ENCODE measurements at regions of chr6 and their contacts with region 1.

Region 1: GRCh38 chr6:45310118-45310788 is 17.9 kb upstream of the RUNX2 start:
- DNase-seq: peak; percentile 2 to 80 (median 51)
- ATAC-seq: peak; percentile 87
- H3K4me3 ChIP-seq: peak overlapping the region; percentile 14 to 28
- H3K4me3 Mint-ChIP-seq: peak overlapping the region; percentile 64
- H3K27ac ChIP-seq: peak overlapping the region; percentile 29 to 45
- H3K27ac Mint-ChIP-seq: peak overlapping the region; percentile 95
- H3K4me1 ChIP-seq: peaks cover 35% of the 10 kb centered on the region
- H3K4me1 Mint-ChIP-seq: peaks cover 65% of the 10 kb centered on the region
- H3K27me3 ChIP-seq: no peaks in the 10 kb centered on the region
- H3K27me3 Mint-ChIP-seq: no peaks in the 10 kb centered on the region
- CTCF ChIP-seq: no peak

Region 2: DNA sequence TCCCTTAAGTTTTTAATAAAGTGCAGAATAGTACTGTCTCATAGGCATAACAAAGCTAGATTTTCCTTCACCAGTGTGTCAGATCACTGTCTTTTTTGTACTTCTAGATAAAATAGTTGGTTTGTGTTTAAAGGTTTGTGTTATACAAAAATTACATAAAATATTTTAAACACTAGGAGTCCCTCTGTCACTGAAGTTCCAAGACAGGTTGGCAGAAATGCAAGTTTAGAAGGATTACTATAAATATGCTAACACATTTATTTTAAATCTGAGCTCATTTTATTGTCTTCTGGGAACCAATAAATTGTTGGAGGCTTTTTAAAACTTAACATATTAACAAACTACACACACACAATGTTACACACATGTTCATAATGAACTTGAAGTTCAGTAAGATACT is 12.9 kb before region 1 on chr6:
- CTCF ChIA-PET with region 1: no interaction called
- POLR2A ChIA-PET with region 1: interaction called, 3 read pairs
- intact Hi-C with region 1: loop called in 1 of 2 experiments (anchors 2 kb)
- DNase-seq: no peak
- ATAC-seq: no peak
- H3K4me3 ChIP-seq: no peak overlapping the region
- H3K4me3 Mint-ChIP-seq: no peak overlapping the region
- H3K27ac ChIP-seq: no peak overlapping the region
- H3K27ac Mint-ChIP-seq: peak overlapping the region; percentile 37
- H3K4me1 ChIP-seq: peaks cover 24% of the 10 kb centered on the region
- H3K4me1 Mint-ChIP-seq: peaks cover 53% of the 10 kb centered on the region
- H3K27me3 ChIP-seq: no peaks in the 10 kb centered on the region
- H3K27me3 Mint-ChIP-seq: no peaks in the 10 kb centered on the region
- CTCF ChIP-seq: no peak

Region 3: DNA sequence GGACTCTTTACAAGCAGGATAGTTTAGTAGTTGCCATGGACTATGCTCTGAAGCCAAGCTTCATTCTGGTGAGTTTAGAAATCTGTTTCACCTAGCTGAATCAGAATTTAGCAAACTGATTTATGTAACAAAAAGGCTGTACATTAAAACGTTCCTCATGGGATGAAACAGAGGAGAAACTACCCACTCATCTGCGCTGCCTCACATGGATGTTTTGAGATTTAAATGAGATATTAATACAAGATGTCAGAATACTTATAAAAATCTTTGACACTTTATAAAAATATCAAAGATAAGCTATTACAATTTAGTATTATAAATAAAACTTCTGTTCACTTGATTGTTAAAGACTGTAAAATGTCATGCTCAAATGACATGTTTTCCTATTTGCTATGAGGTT is 34.6 kb after region 1 on chr6:
- CTCF ChIA-PET with region 1: no interaction called
- POLR2A ChIA-PET with region 1: no interaction called
- intact Hi-C with region 1: no loop called
- DNase-seq: no peak
- ATAC-seq: no peak
- H3K4me3 ChIP-seq: no peak overlapping the region
- H3K4me3 Mint-ChIP-seq: no peak overlapping the region
- H3K27ac ChIP-seq: no peak overlapping the region
- H3K27ac Mint-ChIP-seq: no peak overlapping the region
- H3K4me1 ChIP-seq: peaks cover under 1% of the 10 kb centered on the region
- H3K4me1 Mint-ChIP-seq: peaks cover 10% of the 10 kb centered on the region
- H3K27me3 ChIP-seq: no peaks in the 10 kb centered on the region
- H3K27me3 Mint-ChIP-seq: no peaks in the 10 kb centered on the region
- CTCF ChIP-seq: no peak

Measured in CD8-positive, alpha-beta T cell (primary cell).